Activated CD4-positive, alpha-beta memory T cell treated with anti-CD3 and anti-CD28 coated beads for 36 hours (primary cell): ENCODE measurements at regions of chr9 and their contacts with region 1.

Region 1: GRCh38 chr9:129467739-129468666 is 152.9 kb downstream of the C9orf50 start:
- DNase-seq: no peak
- H3K4me3 Mint-ChIP-seq: no peak overlapping the region
- H3K27ac Mint-ChIP-seq: no peak overlapping the region
- H3K4me1 Mint-ChIP-seq: peaks cover 16% of the 10 kb centered on the region
- H3K27me3 Mint-ChIP-seq: peaks cover 2% of the 10 kb centered on the region

Region 2: GRCh38 chr9:128733256-128733655 is 734.7 kb before region 1 on chr9:
- CTCF ChIA-PET with region 1: no interaction called
- POLR2A ChIA-PET with region 1: no interaction called
- intact Hi-C with region 1: no loop called
- DNase-seq: peak; percentile 33
- H3K4me3 Mint-ChIP-seq: no peak overlapping the region
- H3K27ac Mint-ChIP-seq: no peak overlapping the region
- H3K4me1 Mint-ChIP-seq: no peaks in the 10 kb centered on the region
- H3K27me3 Mint-ChIP-seq: no peaks in the 10 kb centered on the region

Region 3: DNA sequence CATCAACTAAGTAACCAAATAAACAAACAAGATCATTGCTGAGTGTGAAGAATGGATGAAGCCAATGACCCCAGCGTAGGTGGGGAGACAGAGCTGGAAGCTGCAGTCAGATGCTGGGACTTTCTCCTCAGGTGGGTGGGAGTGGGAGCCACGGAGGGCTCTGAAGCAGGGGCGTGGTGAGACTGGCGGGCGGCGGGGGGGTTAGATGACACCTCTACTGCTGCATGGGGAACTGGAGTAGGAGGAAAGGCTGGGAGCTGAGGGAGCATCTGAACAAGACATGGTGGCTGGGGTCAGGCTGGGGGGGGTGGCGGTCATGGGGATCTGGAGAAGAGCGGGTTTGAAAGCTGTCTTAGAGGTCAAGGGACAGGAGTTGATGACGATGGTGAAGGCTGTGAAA is 40.9 kb before region 1 on chr9:
- CTCF ChIA-PET with region 1: no interaction called
- POLR2A ChIA-PET with region 1: no interaction called
- intact Hi-C with region 1: loop called (anchors 1 kb)
- DNase-seq: no peak
- H3K4me3 Mint-ChIP-seq: no peak overlapping the region
- H3K27ac Mint-ChIP-seq: no peak overlapping the region
- H3K4me1 Mint-ChIP-seq: peaks cover 10% of the 10 kb centered on the region
- H3K27me3 Mint-ChIP-seq: no peaks in the 10 kb centered on the region

Region 4: GRCh38 chr9:129509522-129510270 is 41.7 kb after region 1 on chr9:
- CTCF ChIA-PET with region 1: no interaction called
- POLR2A ChIA-PET with region 1: no interaction called
- intact Hi-C with region 1: no loop called
- DNase-seq: no peak
- H3K4me3 Mint-ChIP-seq: no peak overlapping the region
- H3K27ac Mint-ChIP-seq: no peak overlapping the region
- H3K4me1 Mint-ChIP-seq: peaks cover 1% of the 10 kb centered on the region
- H3K27me3 Mint-ChIP-seq: no peaks in the 10 kb centered on the region